CD8-positive, alpha-beta T cell (primary cell): ENCODE measurements at regions of chr14 and their contacts with region 1.

Region 1: DNA sequence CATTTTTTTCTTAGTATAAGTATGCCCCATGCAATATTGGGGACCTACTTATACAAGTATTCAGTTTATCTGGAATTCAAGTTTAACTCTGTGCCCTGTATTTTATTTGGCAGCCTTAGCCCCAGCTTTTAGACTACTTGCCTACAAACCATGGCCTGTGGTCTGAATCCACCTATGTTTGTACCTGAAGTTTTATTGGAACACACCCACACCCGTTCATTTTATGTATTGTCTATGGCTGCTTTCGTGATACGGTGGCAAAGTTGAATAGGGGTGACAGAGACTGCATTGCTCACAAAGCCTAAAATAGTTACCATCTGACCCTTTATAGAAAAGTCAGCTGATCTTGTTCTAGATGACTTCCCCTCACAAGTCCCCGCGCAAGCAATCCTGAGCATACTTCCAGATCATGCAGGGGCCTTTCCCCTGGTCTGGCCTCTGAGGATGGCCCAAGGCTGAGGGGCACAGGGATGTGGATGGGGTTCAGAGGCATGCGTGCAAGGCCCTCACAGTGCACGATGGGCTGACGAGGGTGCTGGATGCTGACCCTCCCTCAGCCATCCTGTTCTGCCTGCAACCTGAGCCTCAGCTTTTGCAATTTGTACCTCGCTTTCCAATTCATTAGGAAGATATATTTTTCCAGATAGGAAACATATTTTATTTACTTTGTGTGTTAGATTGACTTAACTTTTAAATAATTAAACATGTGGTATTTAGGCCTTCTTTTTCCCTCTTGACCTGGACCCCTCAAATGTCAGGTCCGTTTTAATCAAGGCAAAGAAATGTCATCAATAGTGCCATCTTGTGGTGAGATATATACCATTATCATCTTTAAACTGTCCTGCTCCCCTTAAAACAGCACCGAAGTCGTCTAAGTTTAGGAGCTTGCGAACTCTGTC is 527.3 kb upstream of the CCDC196 start:
- DNase-seq: peak in 2 of 9 experiments; percentile 55 to 69
- ATAC-seq: peak; percentile 57
- H3K4me3 ChIP-seq: no peak overlapping the region
- H3K4me3 Mint-ChIP-seq: no peak overlapping the region
- H3K27ac ChIP-seq: no peak overlapping the region
- H3K27ac Mint-ChIP-seq: no peak overlapping the region
- H3K4me1 ChIP-seq: peaks cover 19% of the 10 kb centered on the region
- H3K4me1 Mint-ChIP-seq: peaks cover 26% of the 10 kb centered on the region
- H3K27me3 ChIP-seq: no peaks in the 10 kb centered on the region
- H3K27me3 Mint-ChIP-seq: no peaks in the 10 kb centered on the region
- CTCF ChIP-seq: peak; percentile 83

Region 2: GRCh38 chr14:65222440-65222858 is 736.5 kb before region 1 on chr14:
- CTCF ChIA-PET with region 1: no interaction called
- POLR2A ChIA-PET with region 1: no interaction called
- intact Hi-C with region 1: loop called in 1 of 2 experiments (anchors 2 kb)
- DNase-seq: peak; percentile 12 to 72 (median 53)
- ATAC-seq: peak; percentile 79
- H3K4me3 ChIP-seq: no peak overlapping the region
- H3K4me3 Mint-ChIP-seq: no peak overlapping the region
- H3K27ac ChIP-seq: no peak overlapping the region
- H3K27ac Mint-ChIP-seq: no peak overlapping the region
- H3K4me1 ChIP-seq: peaks cover 8% of the 10 kb centered on the region
- H3K4me1 Mint-ChIP-seq: peaks cover 18% of the 10 kb centered on the region
- H3K27me3 ChIP-seq: no peaks in the 10 kb centered on the region
- H3K27me3 Mint-ChIP-seq: no peaks in the 10 kb centered on the region
- CTCF ChIP-seq: peak; percentile 88

Region 3: GRCh38 chr14:65832431-65833266 is 126.3 kb before region 1 on chr14:
- CTCF ChIA-PET with region 1: interaction called, 28 read pairs
- POLR2A ChIA-PET with region 1: no interaction called
- intact Hi-C with region 1: no loop called
- DNase-seq: no peak
- ATAC-seq: no peak
- H3K4me3 ChIP-seq: no peak overlapping the region
- H3K4me3 Mint-ChIP-seq: no peak overlapping the region
- H3K27ac ChIP-seq: no peak overlapping the region
- H3K27ac Mint-ChIP-seq: no peak overlapping the region
- H3K4me1 ChIP-seq: peaks cover 13% of the 10 kb centered on the region
- H3K4me1 Mint-ChIP-seq: peaks cover 44% of the 10 kb centered on the region
- H3K27me3 ChIP-seq: no peaks in the 10 kb centered on the region
- H3K27me3 Mint-ChIP-seq: no peaks in the 10 kb centered on the region
- CTCF ChIP-seq: no peak

Region 4: GRCh38 chr14:65879248-65880009 is 79.5 kb before region 1 on chr14:
- CTCF ChIA-PET with region 1: interaction called, 11 read pairs
- POLR2A ChIA-PET with region 1: no interaction called
- intact Hi-C with region 1: loop called in 1 of 2 experiments (anchors 5 kb)
- DNase-seq: no peak
- ATAC-seq: no peak
- H3K4me3 ChIP-seq: no peak overlapping the region
- H3K4me3 Mint-ChIP-seq: no peak overlapping the region
- H3K27ac ChIP-seq: no peak overlapping the region
- H3K27ac Mint-ChIP-seq: peak overlapping the region; percentile 64
- H3K4me1 ChIP-seq: peaks cover 37% of the 10 kb centered on the region
- H3K4me1 Mint-ChIP-seq: peaks cover 29% of the 10 kb centered on the region
- H3K27me3 ChIP-seq: no peaks in the 10 kb centered on the region
- H3K27me3 Mint-ChIP-seq: no peaks in the 10 kb centered on the region
- CTCF ChIP-seq: no peak

Region 5: DNA sequence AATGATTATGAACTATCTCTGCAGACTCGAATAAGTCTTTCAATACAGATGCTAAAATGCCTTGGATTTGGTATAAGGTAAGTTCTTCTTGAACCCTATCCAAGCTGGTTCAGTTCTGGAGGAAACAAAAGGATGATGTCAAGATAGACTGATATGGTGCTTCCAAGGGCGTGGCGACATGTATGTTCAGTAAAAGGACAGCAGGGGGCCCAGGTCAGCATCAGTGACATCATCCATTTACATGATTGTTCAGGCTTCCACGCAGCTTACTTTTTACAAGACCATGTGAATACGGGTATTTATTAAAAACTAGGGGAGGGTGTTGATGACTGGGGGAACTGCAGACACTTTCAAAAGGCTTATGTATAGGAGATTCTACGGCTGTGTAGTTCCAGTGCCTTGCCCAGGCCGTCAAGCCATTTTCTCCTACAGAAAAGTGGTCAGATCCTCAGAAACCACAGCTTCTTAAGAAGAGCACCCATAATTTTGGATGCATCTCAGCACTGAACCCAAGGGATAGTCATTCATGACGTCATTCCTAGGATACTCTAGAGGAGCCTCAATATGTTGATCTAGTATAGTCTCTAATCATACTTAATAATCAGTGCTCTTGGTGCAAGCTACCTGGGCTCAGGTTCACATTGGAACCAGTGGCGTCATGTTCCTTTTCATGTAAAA is 18.7 kb before region 1 on chr14:
- CTCF ChIA-PET with region 1: interaction called, 60 read pairs
- POLR2A ChIA-PET with region 1: interaction called, 3 read pairs
- intact Hi-C with region 1: no loop called
- DNase-seq: peak in 2 of 9 experiments; percentile 20 to 33
- ATAC-seq: no peak
- H3K4me3 ChIP-seq: no peak overlapping the region
- H3K4me3 Mint-ChIP-seq: no peak overlapping the region
- H3K27ac ChIP-seq: no peak overlapping the region
- H3K27ac Mint-ChIP-seq: no peak overlapping the region
- H3K4me1 ChIP-seq: peaks cover 31% of the 10 kb centered on the region
- H3K4me1 Mint-ChIP-seq: peaks cover 50% of the 10 kb centered on the region
- H3K27me3 ChIP-seq: no peaks in the 10 kb centered on the region
- H3K27me3 Mint-ChIP-seq: no peaks in the 10 kb centered on the region
- CTCF ChIP-seq: no peak